Panc1 (cell line): ENCODE measurements at regions of chr3 and their contacts with region 1.

Region 1: DNA sequence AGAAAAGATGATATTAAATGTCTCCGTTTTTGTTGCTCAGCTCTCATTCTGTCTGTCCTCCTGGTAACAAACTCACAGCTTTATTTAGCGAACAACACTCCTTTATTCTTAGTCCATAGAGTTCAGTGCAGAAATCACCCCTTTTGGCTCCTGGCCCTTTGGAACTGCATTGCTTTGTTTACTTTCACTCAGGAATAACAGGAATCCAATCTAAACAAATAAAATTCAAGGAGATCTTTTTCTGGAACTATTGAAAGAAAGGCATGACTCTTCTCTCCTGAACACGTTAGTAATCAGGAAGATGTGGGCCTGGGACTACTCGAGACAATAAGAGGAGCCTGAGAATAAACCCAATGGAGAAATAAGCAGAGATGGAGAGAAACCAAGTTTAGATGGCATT is 409.2 kb downstream of the DIPK2A start:
- DNase-seq: no peak
- ATAC-seq: no peak
- H3K4me3 ChIP-seq: no peak overlapping the region
- H3K27ac ChIP-seq: no peak overlapping the region
- H3K4me1 ChIP-seq: no peaks in the 10 kb centered on the region
- H3K27me3 ChIP-seq: no peaks in the 10 kb centered on the region
- CTCF ChIP-seq: no peak

Region 2: GRCh38 chr3:144351773-144352365 is 29.0 kb before region 1 on chr3:
- CTCF ChIA-PET with region 1: no interaction called
- POLR2A ChIA-PET with region 1: no interaction called
- in situ Hi-C with region 1: no loop called
- intact Hi-C with region 1: loop called (anchors 1 kb)
- DNase-seq: no peak
- ATAC-seq: no peak
- H3K4me3 ChIP-seq: no peak overlapping the region
- H3K27ac ChIP-seq: no peak overlapping the region
- H3K4me1 ChIP-seq: no peaks in the 10 kb centered on the region
- H3K27me3 ChIP-seq: no peaks in the 10 kb centered on the region
- CTCF ChIP-seq: no peak